ENCODE measurements at regions of chr16 and their contacts with region 1.

Region 1: GRCh38 chr16:89749647-89750046 is 28.3 kb downstream of the ZNF276 start:
- DNase-seq: no peak
- ATAC-seq: no peak
- H3K4me3 ChIP-seq: no peak overlapping the region
- H3K27ac ChIP-seq: no peak overlapping the region
- H3K4me1 ChIP-seq: no peaks in the 10 kb centered on the region
- CTCF ChIP-seq: no peak
- EP300 ChIP-seq: no peak
- POLR2A ChIP-seq: no peak
- RAD21 ChIP-seq: no peak

Region 2: GRCh38 chr16:89761304-89761922 is 11.8 kb after region 1 on chr16:
- CTCF ChIA-PET with region 1: interaction called, 11 read pairs
- POLR2A ChIA-PET with region 1: no interaction called
- DNase-seq: no peak
- ATAC-seq: no peak
- H3K4me3 ChIP-seq: no peak overlapping the region
- H3K27ac ChIP-seq: no peak overlapping the region
- H3K4me1 ChIP-seq: no peaks in the 10 kb centered on the region
- CTCF ChIP-seq: no peak
- EP300 ChIP-seq: no peak
- POLR2A ChIP-seq: no peak
- RAD21 ChIP-seq: no peak